Cardiac septum (tissue), 1 donor: ENCODE measurements at regions of chr5 and their contacts with region 1.

Region 1: GRCh38 chr5:86880785-86881492 is 263.2 kb downstream of the COX7C start:
- DNase-seq: no peak

Region 2: DNA sequence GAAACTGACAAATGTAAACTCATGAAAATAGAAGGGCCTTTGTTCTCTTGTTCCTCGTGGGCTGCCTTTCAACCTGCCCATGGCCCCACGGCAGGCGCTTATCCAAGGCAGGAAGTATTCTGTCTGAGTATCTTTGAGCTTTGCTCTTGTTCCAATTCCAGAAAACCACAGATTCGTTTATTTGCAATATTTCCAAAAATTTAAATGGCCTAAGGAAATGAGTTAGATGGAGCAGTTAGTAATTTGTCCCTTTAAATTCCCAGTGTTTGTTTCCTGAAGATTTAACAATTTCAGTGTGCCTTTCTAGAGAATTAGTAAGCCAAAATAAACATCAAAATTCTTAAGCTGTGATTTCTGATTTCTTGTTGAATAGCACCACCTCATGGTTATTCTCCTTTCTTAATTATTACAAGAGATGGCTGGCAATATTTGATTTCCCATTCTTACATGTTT is 87.4 kb after region 1 on chr5:
- intact Hi-C with region 1: loop called (anchors 2 kb)
- DNase-seq: no peak

Region 3: DNA sequence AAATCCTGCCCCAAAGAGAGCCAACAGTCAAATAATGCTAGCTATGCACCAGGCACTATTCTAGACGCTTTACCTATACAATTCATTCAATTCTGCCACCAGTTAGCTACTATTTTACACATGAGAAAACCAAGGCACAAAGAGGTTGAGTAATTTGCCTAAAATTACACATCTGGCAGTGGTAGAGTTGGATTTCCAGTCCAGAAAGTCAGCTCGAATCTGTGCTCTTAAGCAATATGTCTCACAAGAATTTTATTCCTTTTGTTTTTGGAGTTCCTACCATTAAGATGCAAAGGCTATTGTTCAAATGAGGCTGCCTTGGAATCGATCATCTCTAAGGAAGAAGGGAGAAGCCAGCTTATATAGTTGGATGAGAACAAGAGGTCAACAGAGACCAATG is 129.8 kb after region 1 on chr5:
- intact Hi-C with region 1: loop called (anchors 5 kb)
- DNase-seq: no peak

Region 4: DNA sequence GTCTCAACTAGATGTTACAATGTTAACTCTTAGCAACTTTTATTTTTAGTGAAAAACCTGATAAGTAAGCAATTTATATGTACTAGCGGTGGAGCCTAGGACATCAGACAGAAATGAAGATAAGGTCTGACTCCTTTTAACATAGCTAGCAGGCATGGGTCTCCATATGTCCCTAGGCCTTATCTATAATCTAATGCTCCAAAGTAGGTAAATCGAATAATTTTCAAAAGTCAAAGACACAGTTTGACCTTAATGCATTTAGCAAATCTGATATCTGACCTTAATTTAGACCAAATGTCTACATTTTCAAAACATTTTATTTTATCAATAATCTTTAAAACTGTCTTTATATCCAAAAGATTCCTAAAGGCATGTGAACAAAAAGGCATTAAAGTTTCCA is 836.8 kb after region 1 on chr5:
- intact Hi-C with region 1: no loop called
- DNase-seq: no peak